Esophagus muscularis mucosa (tissue), 4 donors: ENCODE measurements at regions of chr1 and their contacts with region 1.

Region 1: DNA sequence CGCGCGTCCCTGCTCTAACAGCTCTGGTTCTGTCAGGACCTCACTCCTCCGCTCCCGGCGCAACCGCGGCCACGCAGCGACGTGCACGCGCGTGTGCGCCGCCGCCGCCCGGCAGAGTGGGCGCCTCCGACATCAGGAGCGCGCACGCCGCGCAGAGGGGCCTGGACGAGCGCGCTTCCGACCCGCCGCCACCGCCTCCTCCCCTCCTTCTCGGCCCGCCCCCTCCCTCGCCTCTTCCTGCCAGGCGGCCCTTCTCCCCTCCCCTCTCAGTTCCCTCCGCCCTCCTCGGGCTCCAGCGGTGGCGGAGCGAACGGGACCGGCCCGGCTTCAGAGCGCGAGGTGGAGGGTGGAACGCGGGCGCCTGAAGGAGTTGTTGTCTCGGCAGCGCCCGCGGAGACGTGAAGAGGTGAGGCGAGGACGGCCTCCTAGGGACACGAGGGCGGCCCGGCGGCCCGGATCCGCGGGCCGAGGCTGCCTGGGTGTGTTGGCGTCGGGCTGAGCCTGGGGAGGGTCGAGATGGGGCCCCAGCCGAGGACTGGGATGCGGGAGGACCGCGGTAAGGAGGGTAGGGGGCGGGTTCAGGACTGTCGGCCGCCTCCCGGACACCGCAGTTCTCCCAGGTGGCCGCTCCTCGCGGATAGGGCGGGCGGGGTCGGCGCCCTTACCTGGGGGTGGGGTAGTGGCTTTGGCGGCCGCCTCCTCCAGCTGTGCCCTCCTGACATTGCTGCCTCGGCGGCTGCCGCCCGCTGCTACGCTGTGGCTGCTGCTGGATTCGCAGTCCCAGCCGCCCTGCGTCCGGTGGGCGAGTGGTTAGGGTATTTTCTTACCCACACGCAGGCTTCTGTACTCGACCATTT is at the start of gene RABGAP1L:
- DNase-seq: peak; percentile 97
- H3K4me3 ChIP-seq: peak within 1 kb of the TSS; percentile 77 to 98 (median 87)
- H3K27ac ChIP-seq: peak within 1 kb of the TSS; percentile 89 to 97 (median 93)
- H3K4me1 ChIP-seq: peaks cover 0 to 31% (median 26%) of the 10 kb centered on the region in 4 donors
- H3K27me3 ChIP-seq: no peaks in the 10 kb centered on the region
- CTCF ChIP-seq: no peak
- EP300 ChIP-seq: no peak
- POLR2A ChIP-seq: peak; percentile 60
- total RNA-seq, gene RABGAP1L: 39.3 to 101 (median 63.7) TPM

Region 2: DNA sequence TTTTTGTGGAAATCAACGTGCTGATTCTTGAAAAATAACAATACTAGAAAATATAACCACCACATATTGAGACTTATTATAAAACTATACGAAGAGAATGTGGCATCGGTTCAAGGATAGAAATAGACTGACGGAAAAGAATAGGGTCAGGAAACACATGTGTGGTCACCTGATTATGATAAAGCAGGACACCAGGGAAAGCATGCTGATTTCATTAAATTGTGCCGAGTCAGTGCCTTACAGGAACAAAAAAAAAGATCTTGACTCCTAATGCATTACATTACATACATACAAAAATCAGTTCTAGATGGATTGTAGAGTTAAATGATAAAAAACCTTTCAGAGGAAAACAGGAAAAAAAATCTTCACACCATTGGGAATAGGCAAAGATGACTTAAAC is 198.9 kb before region 1 on chr1:
- intact Hi-C with region 1: no loop called
- DNase-seq: no peak
- H3K4me3 ChIP-seq: no peak overlapping the region
- H3K27ac ChIP-seq: no peak overlapping the region
- H3K4me1 ChIP-seq: peaks cover 0 to 4% (median 0%) of the 10 kb centered on the region in 4 donors
- H3K27me3 ChIP-seq: no peaks in the 10 kb centered on the region
- CTCF ChIP-seq: no peak
- EP300 ChIP-seq: no peak
- POLR2A ChIP-seq: no peak

Region 3: GRCh38 chr1:174022080-174022975 is 137.2 kb before region 1 on chr1 and contains the start of gene RC3H1:
- intact Hi-C with region 1: loop called (anchors 5 kb)
- DNase-seq: peak; percentile 96
- H3K4me3 ChIP-seq: peak within 1 kb of the TSS; percentile 90 to 98 (median 94)
- H3K27ac ChIP-seq: peak within 1 kb of the TSS; percentile 95 to 97 (median 96)
- H3K4me1 ChIP-seq: peaks cover 49 to 56% (median 50%) of the 10 kb centered on the region in 4 donors
- H3K27me3 ChIP-seq: no peaks in the 10 kb centered on the region
- CTCF ChIP-seq: no peak
- EP300 ChIP-seq: no peak
- POLR2A ChIP-seq: peak; percentile 52
- total RNA-seq, gene RC3H1: 35.7 to 43.8 (median 39.3) TPM

Region 4: DNA sequence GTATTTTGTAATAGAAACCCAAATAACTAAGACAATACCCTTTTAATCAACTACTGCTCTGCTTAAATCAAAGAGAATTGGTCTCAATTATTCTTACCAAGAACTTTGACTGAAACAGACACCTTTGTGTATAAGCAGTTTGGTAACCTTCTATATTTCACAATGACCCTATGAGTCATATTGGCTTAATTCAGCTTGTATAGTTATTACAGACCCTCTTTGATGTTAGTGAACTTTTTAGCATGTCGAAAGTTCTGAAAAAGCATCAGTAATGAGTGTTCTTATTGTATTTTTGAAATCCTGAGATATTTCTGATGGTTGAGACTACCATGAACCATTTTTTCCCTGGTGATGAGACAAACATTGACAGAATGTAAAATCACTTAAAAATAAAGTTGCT is 43.4 kb before region 1 on chr1:
- intact Hi-C with region 1: no loop called
- DNase-seq: no peak
- H3K4me3 ChIP-seq: no peak overlapping the region
- H3K27ac ChIP-seq: no peak overlapping the region
- H3K4me1 ChIP-seq: peaks cover 0 to 39% (median 31%) of the 10 kb centered on the region in 4 donors
- H3K27me3 ChIP-seq: no peaks in the 10 kb centered on the region
- CTCF ChIP-seq: no peak
- EP300 ChIP-seq: no peak
- POLR2A ChIP-seq: no peak

Region 5: DNA sequence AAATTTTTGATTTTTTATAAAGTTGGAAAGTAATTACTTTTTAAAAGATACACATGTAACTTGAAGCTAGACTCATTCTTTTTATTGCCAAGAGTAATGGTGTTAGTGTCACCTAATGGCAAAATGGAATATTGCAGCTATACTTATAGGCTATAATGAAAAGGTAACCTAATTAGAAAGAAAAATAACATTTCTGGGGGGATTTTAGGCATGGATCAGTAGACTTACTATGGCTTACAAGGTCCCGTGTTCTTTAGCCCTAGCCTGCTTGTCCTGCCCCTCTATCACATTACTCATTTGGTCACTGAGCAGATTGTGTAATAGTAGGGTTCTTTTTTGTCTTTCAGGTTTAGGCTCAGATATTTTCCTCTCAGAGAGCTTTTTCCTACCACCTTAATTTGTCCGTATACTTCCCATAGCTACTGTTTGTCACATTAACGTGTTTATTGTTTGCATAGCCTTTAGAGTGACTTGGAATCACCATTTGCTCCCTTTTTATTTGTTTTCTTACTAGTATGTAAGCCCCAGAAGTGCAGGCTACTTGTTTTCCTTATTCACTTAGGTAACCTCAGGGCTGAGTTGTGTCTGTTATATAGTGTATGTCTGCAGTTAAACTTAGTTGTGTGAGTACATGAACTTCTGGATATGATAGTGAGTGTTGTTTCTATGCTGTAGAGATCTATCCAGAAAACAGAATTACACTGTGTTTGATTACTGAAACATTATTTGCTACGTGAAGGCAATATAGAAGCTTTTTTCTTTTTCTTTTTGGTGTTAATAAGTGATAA is 58.5 kb after region 1 on chr1:
- intact Hi-C with region 1: loop called (anchors 5 kb)
- DNase-seq: no peak
- H3K4me3 ChIP-seq: peak overlapping the region in 1 of 4 donors; percentile 13
- H3K27ac ChIP-seq: peak overlapping the region; percentile 33 to 41 (median 36)
- H3K4me1 ChIP-seq: peaks cover 9 to 32% (median 17%) of the 10 kb centered on the region in 4 donors
- H3K27me3 ChIP-seq: no peaks in the 10 kb centered on the region
- CTCF ChIP-seq: peak; percentile 71 to 82 (median 76)
- EP300 ChIP-seq: no peak
- POLR2A ChIP-seq: no peak